ENCODE measurements at regions of chr21 and their contacts with region 1.

Region 1: GRCh38 chr21:29372063-29372802 is 73.5 kb downstream of the BACH1 start:
- DNase-seq: peak in 1 of 3 donors; percentile 86
- ATAC-seq: peak; percentile 88
- H3K4me3 ChIP-seq: no peak overlapping the region
- H3K4me1 ChIP-seq: no peaks in the 10 kb centered on the region
- CTCF ChIP-seq: no peak

Region 2: DNA sequence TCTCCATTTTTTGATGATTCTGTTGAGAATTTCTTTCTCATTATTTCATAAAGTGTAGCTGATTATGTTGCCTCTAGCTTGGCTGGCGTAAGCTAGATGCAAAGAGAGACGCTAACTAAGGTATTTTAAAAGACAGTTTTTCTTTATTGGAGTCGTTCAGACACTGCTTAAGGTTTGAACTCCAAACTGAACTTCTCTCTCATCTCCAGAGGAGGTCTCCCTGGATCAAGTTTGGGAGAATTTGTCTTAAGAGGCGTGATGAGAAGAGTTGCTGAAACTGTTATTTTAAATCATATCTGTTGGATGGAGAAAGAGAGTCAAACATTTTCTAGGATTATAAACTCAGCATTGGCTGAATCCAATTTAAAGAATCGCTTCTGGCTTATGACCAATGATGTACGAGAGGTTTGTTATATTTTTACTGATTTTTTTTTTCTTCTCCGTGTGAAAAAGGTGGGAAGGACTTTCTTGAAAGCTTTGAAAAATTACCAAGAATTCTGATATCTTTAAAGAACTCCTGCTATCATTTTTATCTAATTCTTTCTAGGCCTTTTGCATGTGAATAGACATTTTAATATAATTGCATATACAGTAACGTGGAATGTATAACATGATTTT is 207.8 kb before region 1 on chr21:
- intact Hi-C with region 1: loop called (anchors 5 to 10 kb)
- DNase-seq: no peak
- ATAC-seq: peak; percentile 71
- H3K4me3 ChIP-seq: no peak overlapping the region
- H3K4me1 ChIP-seq: no peaks in the 10 kb centered on the region
- CTCF ChIP-seq: peak; percentile 14

Region 3: DNA sequence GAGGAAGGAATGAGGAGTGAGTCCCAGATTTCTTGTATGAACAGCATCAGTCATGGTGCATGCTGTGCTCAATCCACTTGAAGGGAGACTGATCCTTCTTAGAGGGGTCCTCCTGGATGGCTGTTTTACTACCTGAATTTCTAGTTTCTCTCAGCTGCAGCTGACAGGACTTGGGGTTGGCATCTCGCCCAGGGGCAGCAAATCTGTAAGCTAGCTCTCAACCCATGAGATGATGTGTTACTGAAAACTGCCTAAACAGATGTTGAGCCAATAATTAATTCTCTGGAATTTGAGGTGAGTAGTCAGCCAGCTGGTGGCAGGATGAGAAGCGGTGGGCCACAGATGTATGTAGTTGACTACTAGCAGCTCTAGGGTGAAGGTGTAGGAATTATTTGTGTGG is 53.9 kb before region 1 on chr21:
- intact Hi-C with region 1: no loop called
- DNase-seq: no peak
- ATAC-seq: no peak
- H3K4me3 ChIP-seq: no peak overlapping the region
- H3K4me1 ChIP-seq: peaks cover 1% of the 10 kb centered on the region
- CTCF ChIP-seq: no peak